ENCODE measurements at regions of chr12 and their contacts with region 1.

Region 1: DNA sequence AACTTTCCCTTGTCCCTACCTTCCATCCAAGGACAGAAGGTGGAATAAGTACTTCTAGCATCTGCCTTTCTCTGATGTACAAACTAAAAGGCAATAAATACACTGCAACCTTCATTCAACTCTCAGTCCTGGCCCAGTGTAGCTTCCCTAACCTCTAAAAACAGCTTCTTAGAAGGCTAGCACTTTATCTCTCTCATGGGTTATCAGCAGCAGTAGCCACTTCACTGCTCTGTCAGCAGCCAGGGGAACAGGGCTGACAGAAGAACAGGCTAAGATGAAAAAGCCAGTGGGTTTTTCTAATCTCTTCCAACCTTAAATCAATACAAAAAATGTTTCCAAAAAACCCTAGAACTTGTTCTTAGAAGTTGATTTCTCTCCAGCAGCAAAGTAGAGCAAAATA is 13.2 kb downstream of the BAZ2A start:
- DNase-seq: no peak
- H3K4me3 ChIP-seq: no peak overlapping the region
- H3K27ac ChIP-seq: no peak overlapping the region
- H3K4me1 ChIP-seq: no peaks in the 10 kb centered on the region
- H3K27me3 ChIP-seq: no peaks in the 10 kb centered on the region
- CTCF ChIP-seq: no peak

Region 2: GRCh38 chr12:56468216-56469006 is 148.5 kb before region 1 on chr12 and contains the start of gene SPRYD4:
- CTCF ChIA-PET with region 1: no interaction called
- POLR2A ChIA-PET with region 1: no interaction called
- intact Hi-C with region 1: no loop called
- DNase-seq: peak; percentile 79 to 88
- H3K4me3 ChIP-seq: peak within 1 kb of the TSS; percentile 99
- H3K27ac ChIP-seq: peak within 1 kb of the TSS; percentile 74
- H3K4me1 ChIP-seq: peaks cover 7% of the 10 kb centered on the region; the same call in 1 of the 2 replicates
- H3K27me3 ChIP-seq: no peaks in the 10 kb centered on the region
- CTCF ChIP-seq: peak; percentile 41; the same call in 1 of the 2 replicates
- total RNA-seq, gene SPRYD4: 3.2 and 3.3 TPM in 2 replicates

Region 3: DNA sequence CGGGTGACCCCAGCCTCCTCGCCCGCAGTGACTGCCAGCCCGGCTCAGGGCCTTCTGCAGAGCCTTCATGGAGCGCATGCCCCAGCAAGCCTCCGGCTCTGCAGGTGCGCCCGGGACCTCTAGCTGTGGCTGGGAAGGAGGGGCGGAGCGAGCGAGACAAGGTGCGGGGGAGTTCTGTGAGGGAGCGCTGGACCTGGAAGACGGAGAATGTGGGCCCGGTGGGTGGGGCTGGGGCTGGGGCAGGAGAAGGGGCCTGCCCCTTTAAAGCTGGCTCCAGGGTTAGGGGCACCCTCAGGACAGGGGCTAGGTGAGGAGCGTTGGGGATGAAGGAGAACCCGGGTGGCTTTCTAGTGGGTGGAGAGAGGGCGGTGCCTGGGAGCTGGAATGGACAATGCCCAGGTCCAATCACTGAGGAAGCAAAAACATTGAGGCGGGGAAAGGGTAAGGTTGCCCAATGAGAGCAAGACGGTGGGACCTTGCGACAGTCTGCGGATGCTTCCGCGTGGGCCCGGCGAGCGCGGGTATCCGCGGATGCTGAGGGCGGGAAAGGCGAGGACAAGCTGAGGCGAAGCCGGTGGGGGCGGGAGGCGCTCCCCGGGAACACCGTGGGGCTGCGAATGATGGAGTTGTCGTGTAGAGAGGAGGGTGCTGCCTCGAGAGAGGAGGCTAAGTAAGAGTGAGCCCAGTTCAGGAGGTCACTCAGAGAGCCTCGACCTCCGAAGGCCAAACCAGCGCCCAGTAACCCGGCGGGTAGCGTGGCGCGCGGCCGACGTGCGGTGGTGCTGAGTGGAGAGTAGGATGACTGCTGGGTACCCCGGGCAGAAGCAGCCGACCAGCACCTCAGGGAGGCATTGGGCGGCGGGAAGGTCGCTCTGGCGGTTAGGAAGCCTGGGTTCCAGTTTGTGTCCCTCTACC is 128.6 kb before region 1 on chr12 and contains the start of gene GLS2:
- CTCF ChIA-PET with region 1: no interaction called
- POLR2A ChIA-PET with region 1: no interaction called
- intact Hi-C with region 1: no loop called
- DNase-seq: peak; percentile 59 to 77
- H3K4me3 ChIP-seq: peak within 1 kb of the TSS; percentile 57; the same call in 1 of the 2 replicates
- H3K27ac ChIP-seq: no peak within 1 kb of the TSS
- H3K4me1 ChIP-seq: no peaks in the 10 kb centered on the region
- H3K27me3 ChIP-seq: peaks cover 24% of the 10 kb centered on the region; the same call in 1 of the 2 replicates
- CTCF ChIP-seq: no peak
- total RNA-seq, gene GLS2: 1.3 and 2.9 TPM in 2 replicates

Region 4: DNA sequence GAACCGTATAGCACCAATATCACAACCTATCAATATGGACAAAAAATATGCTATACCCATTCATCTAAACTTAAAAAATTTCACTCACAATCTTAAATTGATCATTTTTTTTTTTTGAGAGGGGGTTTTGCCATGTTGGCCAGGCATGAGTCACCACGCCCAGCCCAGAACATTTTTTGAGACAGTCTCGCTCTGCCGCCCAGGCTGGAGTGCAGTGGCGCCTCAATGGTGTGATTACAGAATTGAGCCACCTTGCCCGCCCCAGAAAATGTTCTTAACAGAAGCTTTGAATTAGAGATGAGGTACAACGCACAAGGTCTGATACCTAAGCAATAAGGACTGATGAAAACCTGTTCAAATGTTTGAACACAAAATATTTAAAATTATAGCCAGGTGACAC is 44.6 kb after region 1 on chr12:
- CTCF ChIA-PET with region 1: no interaction called
- POLR2A ChIA-PET with region 1: no interaction called
- intact Hi-C with region 1: no loop called
- DNase-seq: peak; percentile 46 to 55
- H3K4me3 ChIP-seq: no peak overlapping the region
- H3K27ac ChIP-seq: peak overlapping the region; percentile 84
- H3K4me1 ChIP-seq: peaks cover 41% of the 10 kb centered on the region
- H3K27me3 ChIP-seq: no peaks in the 10 kb centered on the region
- CTCF ChIP-seq: no peak

Region 5: DNA sequence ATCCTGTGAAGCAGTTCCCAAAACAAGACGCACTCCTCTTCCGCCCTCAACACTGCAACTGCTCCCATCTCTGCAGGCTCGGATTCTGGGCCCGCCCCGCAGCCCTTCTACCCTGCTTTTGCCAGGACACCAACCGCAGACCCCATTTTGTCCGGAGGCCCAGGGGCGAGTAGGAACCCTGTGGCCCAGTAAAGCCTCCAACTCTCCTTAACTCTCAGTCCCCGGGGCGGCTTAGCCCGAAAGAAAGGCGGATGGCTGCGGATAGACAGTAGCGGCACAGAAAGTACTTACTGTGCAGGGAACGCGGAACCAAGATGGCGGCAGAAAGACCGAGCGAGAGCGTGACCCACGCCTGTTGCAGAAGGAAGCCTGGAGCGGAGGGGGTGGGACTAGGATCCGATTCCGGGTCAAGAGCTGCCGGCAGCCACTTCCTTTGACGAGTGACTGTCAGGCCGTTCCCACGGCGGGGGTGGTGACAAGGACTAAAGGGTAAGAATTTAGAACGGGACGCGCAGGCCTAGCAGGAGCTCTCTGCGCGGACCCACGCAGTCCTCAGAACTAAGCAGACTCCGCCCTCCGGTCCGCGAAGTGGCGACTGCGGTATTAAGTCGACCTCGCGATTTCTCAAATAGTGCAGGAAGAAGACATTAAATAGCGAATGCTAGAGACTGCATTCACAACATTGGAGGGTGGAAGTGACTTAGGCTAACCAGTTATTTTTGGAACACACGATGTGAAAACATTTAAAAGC is 108.2 kb after region 1 on chr12 and contains the start of gene NACA:
- CTCF ChIA-PET with region 1: no interaction called
- POLR2A ChIA-PET with region 1: interaction called, 10 read pairs
- intact Hi-C with region 1: no loop called
- DNase-seq: peak; percentile 94 to 95
- H3K4me3 ChIP-seq: peak within 1 kb of the TSS; percentile 99
- H3K27ac ChIP-seq: peak within 1 kb of the TSS; percentile 94
- H3K4me1 ChIP-seq: peaks cover 39% of the 10 kb centered on the region
- H3K27me3 ChIP-seq: no peaks in the 10 kb centered on the region
- CTCF ChIP-seq: no peak
- total RNA-seq, gene NACA: 812 and 1,035 TPM in 2 replicates

Region 6: GRCh38 chr12:56751712-56752598 is 135.0 kb after region 1 on chr12 and contains the start of gene PRIM1:
- CTCF ChIA-PET with region 1: no interaction called
- POLR2A ChIA-PET with region 1: no interaction called
- intact Hi-C with region 1: no loop called
- DNase-seq: peak; percentile 71 to 85
- H3K4me3 ChIP-seq: peak within 1 kb of the TSS; percentile 66
- H3K27ac ChIP-seq: peak within 1 kb of the TSS; percentile 21
- H3K4me1 ChIP-seq: peaks cover 8% of the 10 kb centered on the region; the same call in 1 of the 2 replicates
- H3K27me3 ChIP-seq: no peaks in the 10 kb centered on the region
- CTCF ChIP-seq: peak; percentile 58
- total RNA-seq, gene PRIM1: 27.2 and 35.8 TPM in 2 replicates

Measured in PC-9 (cell line).